ENCODE measurements at regions of chr4 and their contacts with region 1.

Region 1: GRCh38 chr4:158624889-158625478 is 46.7 kb downstream of the C4orf46 start:
- DNase-seq: no peak
- H3K4me3 Mint-ChIP-seq: no peak overlapping the region
- H3K27ac Mint-ChIP-seq: no peak overlapping the region
- H3K4me1 Mint-ChIP-seq: no peaks in the 10 kb centered on the region
- H3K27me3 Mint-ChIP-seq: peaks cover 18% of the 10 kb centered on the region

Region 2: DNA sequence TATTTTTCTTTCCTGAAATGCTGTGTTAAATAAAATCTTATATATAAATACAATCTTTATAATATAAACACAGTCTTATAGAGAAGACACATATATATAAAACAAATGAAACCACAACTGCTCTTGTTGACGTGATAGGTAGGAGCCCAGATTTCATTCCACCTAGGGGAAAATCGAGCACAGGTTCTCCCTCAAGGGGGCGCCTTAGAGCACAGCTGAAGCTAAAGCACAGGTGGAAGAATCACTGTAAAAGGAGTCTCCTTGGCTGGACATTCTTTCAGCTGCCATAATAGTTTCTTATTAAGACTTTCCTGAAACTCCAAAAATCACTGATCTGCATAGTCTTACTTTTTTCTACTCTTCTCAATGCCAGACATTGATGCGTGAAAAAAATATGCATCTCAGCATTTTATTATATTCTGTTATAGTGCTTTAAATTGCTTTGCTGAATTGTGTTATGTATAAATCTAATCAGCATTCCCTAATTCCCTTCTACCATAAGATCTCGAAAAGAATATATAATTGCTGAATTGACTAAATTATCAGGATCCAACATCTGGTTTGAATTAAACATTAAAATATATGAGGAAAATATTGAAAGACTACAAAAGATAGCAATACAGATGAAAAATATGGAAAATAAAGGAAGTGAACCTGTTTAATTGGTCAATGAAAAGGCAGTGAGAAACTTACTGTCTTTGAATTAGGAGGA is 128.8 kb before region 1 on chr4:
- intact Hi-C with region 1: loop called (anchors 1 kb)
- DNase-seq: peak; percentile 78
- H3K4me3 Mint-ChIP-seq: no peak overlapping the region
- H3K27ac Mint-ChIP-seq: no peak overlapping the region
- H3K4me1 Mint-ChIP-seq: no peaks in the 10 kb centered on the region
- H3K27me3 Mint-ChIP-seq: peaks cover 4% of the 10 kb centered on the region